ENCODE measurements at regions of chr2 and their contacts with region 1.

Region 1: GRCh38 chr2:143223556-143223955 is 94.3 kb downstream of the ARHGAP15 start:
- DNase-seq: no peak
- H3K4me3 ChIP-seq: no peak overlapping the region
- H3K27ac ChIP-seq: no peak overlapping the region
- H3K27me3 ChIP-seq: no peaks in the 10 kb centered on the region
- CTCF ChIP-seq: no peak

Region 2: DNA sequence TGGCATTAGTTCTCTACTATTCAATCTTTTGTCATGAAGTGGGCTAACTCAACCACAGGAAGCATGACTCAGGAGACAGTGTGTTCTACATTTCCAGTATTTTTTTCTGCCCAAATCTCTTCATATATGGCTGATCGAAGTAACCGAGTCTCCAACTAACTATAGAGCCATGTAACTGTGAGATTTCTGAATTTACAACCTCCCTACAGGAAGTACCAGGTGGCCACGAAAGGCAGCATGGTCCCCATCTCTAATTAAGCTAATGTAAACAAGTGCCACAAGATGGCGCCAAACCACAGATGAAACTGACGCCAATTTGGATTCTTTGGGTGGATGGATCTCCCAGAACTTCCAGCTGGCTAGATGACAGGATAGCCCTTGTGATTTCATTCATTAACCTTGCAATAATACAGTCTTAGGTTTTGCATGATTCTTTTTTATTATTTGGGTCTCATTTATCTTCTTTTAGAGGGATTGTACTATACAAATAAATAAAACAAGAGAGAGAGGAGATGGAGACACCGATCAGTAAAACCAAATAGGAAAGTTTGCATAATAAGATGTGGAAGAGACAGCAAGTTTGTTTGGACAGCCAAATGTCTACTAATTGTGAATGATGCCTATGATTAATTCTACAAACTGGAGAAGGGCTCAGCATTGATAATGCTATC is 112.7 kb before region 1 on chr2:
- CTCF ChIA-PET with region 1: interaction called, 28 read pairs
- POLR2A ChIA-PET with region 1: no interaction called
- DNase-seq: peak; percentile 6
- H3K4me3 ChIP-seq: no peak overlapping the region
- H3K27ac ChIP-seq: no peak overlapping the region
- H3K27me3 ChIP-seq: no peaks in the 10 kb centered on the region
- CTCF ChIP-seq: peak; percentile 54

Region 3: DNA sequence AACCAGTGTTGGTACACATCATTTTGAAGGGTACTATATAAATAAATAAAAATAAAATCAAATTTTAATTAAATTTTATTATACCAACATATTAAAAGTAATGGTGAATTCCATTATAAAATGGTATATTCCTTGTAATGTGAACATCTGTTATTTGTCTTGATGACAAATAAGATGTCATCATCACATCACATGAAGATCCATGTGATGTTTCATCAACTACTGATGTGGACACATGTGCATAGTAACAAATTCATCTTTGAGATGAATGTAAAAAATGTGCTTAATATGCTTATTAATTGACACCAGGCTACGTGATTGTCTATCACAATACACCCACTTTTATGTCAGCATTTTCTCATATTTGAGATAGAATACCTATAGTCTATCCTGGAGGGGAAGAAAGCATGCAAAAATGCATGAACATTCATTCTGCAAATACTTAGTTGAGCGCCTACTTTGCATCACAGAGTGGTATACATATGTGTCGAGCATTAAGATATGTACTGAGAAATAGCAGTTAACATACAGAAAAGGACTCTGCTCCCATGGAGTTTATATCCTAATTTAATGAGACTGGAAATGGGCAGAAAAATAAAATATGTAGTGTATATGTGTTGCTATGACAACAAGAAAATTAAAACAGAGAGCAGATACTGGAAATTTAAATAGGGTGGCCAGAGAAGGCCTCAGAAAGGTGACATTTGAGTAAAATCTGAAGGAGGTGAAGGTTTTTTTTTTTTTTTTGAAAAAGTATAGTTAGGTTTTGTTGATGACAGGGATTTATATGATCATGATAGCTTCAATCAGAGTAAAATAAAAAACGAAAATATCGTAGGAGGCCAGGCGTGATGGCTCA is 186.8 kb after region 1 on chr2:
- CTCF ChIA-PET with region 1: no interaction called
- POLR2A ChIA-PET with region 1: no interaction called
- DNase-seq: no peak
- H3K4me3 ChIP-seq: no peak overlapping the region
- H3K27ac ChIP-seq: no peak overlapping the region
- H3K27me3 ChIP-seq: no peaks in the 10 kb centered on the region
- CTCF ChIP-seq: no peak

Region 4: DNA sequence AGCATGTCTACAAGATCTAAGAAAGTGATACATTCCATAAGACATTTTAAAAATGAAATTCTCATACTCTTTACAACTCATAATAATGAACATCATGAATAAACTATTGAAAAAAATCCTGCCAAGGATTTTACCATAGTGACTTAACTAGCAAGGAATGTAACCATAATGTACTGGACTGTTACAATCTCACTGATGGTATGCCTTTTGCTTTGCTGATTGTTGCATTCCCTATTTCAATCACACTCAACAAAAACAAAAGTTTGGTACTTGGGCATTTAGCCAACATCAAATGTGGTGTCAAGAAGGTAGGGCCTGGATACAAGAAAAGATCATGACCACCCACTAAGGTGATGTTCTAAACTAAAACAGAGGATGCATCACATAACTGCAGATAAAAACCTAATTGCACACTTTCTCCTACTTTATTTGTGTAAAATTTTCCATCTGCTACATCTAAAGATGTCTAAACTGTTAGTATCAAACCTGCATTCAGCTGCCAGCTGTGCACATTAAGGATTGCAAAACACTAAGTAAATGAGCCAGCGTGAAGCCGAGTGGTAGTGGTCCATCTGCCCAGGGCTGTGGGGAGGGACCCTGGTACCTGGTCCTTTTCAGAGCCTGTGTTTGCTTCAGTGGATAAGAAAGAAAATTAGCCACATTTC is 732.0 kb after region 1 on chr2:
- CTCF ChIA-PET with region 1: no interaction called
- POLR2A ChIA-PET with region 1: no interaction called
- DNase-seq: peak; percentile 44
- H3K4me3 ChIP-seq: no peak overlapping the region
- H3K27ac ChIP-seq: peak overlapping the region; percentile 43
- H3K27me3 ChIP-seq: no peaks in the 10 kb centered on the region
- CTCF ChIP-seq: no peak

Measured in AG04450 (cell line).